ENCODE measurements at regions of chr2 and their contacts with region 1.

Region 1: DNA sequence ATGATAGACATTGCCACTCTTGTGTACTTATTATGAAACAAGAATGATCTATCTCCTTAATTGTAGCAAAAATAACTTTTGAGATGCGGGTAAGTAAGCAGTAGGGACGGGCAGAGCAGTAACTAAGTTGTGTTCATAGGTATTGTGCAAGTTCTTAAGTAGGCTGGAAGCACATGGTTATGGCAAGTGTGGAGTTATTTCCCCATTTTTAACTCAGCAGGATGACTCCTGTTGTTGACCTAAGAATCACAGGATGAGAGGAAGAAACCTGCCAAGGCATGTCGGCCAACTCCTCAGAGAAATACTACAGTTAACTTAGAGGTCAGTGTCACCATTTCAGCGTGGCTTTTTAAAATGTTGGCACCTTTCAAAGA is 51.1 kb upstream of the FN1 start:
- DNase-seq: no peak

Region 2: DNA sequence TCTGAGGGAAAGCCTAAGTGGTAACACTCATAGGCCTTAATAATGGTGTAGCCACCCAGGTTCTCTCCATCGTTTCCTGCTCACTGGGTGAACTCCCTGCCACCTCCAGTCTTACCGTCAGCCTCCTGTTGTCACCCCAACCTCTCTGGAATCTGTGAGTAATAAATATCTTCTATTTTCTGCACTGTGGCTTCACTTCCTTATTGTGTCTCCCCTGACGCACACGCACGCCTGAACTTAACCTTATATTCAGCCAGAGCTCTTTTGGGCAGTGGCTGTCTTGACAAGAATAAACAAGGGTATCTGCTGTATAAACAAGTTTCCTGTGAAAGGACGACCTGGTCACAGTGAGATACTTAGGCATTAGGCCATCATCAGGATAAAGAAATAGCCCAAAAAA is 1735.5 kb before region 1 on chr2:
- intact Hi-C with region 1: no loop called
- DNase-seq: no peak

Region 3: GRCh38 chr2:215940645-215941184 is 453.7 kb after region 1 on chr2:
- intact Hi-C with region 1: no loop called
- DNase-seq: no peak

Region 4: GRCh38 chr2:217277646-217278398 is 1790.8 kb after region 1 on chr2:
- intact Hi-C with region 1: loop called in 1 of 2 experiments (anchors 10 kb)
- DNase-seq: no peak

Measured in posterior vena cava (tissue), 2 donors.